ENCODE measurements at regions of chr11 and their contacts with region 1.

Region 1: DNA sequence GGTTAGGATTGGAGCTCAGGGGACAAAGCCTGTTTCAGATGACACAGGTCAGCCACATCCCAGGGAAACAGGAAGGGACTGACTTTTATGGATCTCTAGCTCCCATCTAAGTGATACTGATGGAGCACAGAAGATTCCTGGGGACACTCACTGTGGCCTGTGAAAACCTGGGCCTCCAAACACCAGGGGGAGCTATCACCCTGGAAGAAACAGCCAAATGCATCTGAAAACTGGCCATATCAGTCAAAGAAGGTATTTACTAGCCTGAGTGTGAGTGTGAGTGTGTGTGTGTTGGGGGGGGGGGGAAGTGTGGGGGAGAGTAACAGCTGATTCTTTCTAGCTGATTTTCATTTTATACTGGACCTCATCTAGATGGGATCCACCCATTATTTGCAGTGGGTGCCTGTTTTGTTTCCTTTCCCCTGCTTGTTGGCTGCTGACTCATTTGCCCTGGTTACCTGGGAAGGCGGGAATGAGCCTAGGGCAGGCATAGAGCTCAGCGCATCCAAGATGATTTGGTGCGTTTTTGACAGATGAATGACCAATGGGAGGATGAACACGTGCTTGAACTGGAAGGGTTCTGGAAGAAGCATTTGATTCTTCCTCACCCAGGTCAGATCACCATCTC is 284.0 kb downstream of the KIRREL3 start:
- DNase-seq: peak; percentile 43
- ATAC-seq: peak; percentile 48
- H3K4me3 ChIP-seq: no peak overlapping the region
- H3K27ac ChIP-seq: no peak overlapping the region
- H3K4me1 ChIP-seq: peaks cover 6% of the 10 kb centered on the region
- H3K27me3 ChIP-seq: no peaks in the 10 kb centered on the region
- CTCF ChIP-seq: peak; percentile 67
- POLR2A ChIP-seq: no peak
- RAD21 ChIP-seq: peak; percentile 76

Region 2: GRCh38 chr11:126303623-126304456 is 412.7 kb before region 1 on chr11 and contains the start of gene DCPS:
- CTCF ChIA-PET with region 1: no interaction called
- POLR2A ChIA-PET with region 1: no interaction called
- dilution Hi-C with region 1: no loop called
- in situ Hi-C with region 1: loop called (anchors 25 kb)
- intact Hi-C with region 1: no loop called
- DNase-seq: peak; percentile 88
- ATAC-seq: peak; percentile 99
- H3K4me3 ChIP-seq: peak within 1 kb of the TSS; percentile 55
- H3K27ac ChIP-seq: peak within 1 kb of the TSS; percentile 85
- H3K4me1 ChIP-seq: peaks cover 3% of the 10 kb centered on the region; the same call in 1 of the 2 replicates
- H3K27me3 ChIP-seq: no peaks in the 10 kb centered on the region
- CTCF ChIP-seq: no peak
- POLR2A ChIP-seq: peak; percentile 90
- RAD21 ChIP-seq: no peak
- total RNA-seq, gene DCPS: 18.6 and 19.7 TPM in 2 replicates

Region 3: DNA sequence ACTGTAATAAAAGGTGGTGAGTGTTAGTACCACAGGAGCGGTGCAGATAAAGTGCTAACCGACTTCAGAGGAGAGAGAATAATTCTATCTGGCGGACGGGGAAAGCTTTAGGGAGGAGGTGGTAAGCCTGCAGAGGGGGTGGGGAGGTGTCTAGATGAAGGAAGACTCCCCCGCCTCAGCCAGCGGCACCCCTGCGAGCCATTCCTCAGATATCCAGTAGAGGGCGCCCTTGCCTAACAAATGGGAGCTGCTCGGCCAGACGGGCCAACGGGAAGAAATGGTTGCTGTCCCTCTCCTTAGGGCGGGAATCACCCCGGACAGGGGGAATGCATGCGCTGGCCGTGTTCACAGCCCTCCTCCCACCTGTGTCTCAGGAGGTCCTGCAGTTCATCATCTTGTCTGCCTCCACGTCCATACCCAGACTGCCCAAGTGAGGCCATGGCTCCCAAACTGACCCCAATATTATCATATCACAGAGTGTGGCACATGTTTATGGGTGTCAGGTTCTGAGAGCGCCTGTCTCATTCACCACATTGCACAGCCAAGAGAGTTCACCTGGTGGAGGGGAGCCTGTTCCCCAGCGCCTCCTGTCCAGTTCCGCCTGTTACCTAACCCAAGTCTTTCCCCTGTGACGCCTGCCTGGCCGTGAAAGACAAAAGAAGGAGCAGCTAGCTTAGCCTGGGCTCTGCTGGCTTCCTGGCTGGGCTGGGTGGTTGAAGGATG is 275.6 kb before region 1 on chr11:
- CTCF ChIA-PET with region 1: no interaction called
- POLR2A ChIA-PET with region 1: no interaction called
- dilution Hi-C with region 1: no loop called
- in situ Hi-C with region 1: no loop called
- intact Hi-C with region 1: loop called (anchors 10 kb)
- DNase-seq: peak; percentile 59
- ATAC-seq: peak; percentile 96
- H3K4me3 ChIP-seq: no peak overlapping the region
- H3K27ac ChIP-seq: no peak overlapping the region
- H3K4me1 ChIP-seq: no peaks in the 10 kb centered on the region
- H3K27me3 ChIP-seq: no peaks in the 10 kb centered on the region; the same call in 1 of the 2 replicates
- CTCF ChIP-seq: peak; percentile 96
- POLR2A ChIP-seq: no peak
- RAD21 ChIP-seq: peak; percentile 97

Region 4: DNA sequence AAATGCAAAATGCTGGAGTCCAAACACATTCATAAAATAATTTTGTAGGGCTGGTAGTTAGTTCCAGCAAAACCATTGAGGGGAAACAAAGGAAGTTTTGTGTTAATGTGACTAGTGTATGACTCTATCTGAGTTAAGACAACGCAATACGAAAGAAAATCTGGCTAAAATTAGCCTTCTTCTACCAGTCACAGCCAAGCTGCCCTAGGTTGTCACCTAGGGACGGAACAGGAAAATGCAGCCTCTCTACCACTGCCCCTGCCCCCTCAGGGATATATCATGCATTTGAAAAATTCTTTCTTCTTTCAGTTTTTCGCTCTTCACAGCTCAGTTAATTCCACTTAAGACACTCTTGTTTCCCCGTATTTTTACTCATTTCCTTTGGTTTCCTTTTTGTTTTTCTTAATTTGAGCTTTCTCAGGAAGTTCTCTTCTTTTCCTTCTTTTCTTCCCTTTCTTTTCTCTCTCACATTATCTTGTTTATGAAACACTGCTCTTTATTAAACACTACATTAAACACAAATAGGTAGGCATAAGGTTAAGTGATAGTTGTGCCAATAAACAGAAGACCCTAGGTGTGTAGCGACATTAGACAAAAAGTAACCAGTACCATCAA is 253.4 kb after region 1 on chr11:
- CTCF ChIA-PET with region 1: no interaction called
- POLR2A ChIA-PET with region 1: no interaction called
- dilution Hi-C with region 1: no loop called
- in situ Hi-C with region 1: no loop called
- intact Hi-C with region 1: loop called (anchors 1 kb)
- DNase-seq: peak; percentile 83
- ATAC-seq: peak; percentile 99
- H3K4me3 ChIP-seq: no peak overlapping the region
- H3K27ac ChIP-seq: no peak overlapping the region
- H3K4me1 ChIP-seq: no peaks in the 10 kb centered on the region
- H3K27me3 ChIP-seq: no peaks in the 10 kb centered on the region
- CTCF ChIP-seq: peak; percentile 93
- POLR2A ChIP-seq: peak; percentile 56
- RAD21 ChIP-seq: peak; percentile 94

Region 5: DNA sequence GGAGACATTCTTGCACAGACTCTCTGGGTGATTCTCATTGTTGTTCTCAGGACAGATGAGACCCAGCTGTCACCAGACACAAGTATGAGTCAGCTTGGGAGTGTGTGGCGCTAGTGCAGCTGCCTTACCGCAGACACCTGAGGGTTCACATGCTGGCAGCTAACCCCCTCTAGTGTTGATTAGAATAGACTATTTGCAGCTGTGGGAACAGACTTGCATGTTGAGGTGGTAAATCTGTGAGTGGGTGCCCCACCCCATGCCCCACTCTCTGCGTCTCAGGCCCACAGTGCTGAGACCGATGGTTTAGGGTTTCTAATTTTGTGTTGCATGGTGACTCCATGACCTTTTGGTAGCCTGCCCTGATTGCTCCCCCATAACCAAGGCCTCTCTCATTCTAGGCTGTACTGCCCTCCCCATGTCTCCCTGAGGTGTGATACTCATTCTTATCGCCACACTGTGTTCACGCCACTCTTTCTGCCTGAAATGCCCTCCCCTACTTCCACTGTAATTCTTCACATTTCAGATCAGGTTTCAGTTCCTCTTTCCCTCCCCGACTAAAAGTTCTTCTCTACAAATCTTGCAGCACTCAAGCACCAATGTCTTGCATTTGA is 357.7 kb after region 1 on chr11:
- CTCF ChIA-PET with region 1: interaction called, 3 read pairs
- POLR2A ChIA-PET with region 1: no interaction called
- dilution Hi-C with region 1: no loop called
- in situ Hi-C with region 1: no loop called
- intact Hi-C with region 1: loop called (anchors 1 kb)
- DNase-seq: peak; percentile 72
- ATAC-seq: peak; percentile 65
- H3K4me3 ChIP-seq: no peak overlapping the region
- H3K27ac ChIP-seq: no peak overlapping the region
- H3K4me1 ChIP-seq: 0 out of 2 replicates have a peak, but pooled peaks cover 2% of the 10 kb centered on the region
- H3K27me3 ChIP-seq: peaks cover 50% of the 10 kb centered on the region
- CTCF ChIP-seq: peak; percentile 56
- POLR2A ChIP-seq: no peak
- RAD21 ChIP-seq: peak; percentile 75